Activated B cell treated with CpG ODN at 0.5 μM for 24 hours (primary cell): ENCODE measurements at regions of chr2 and their contacts with region 1.

Region 1: DNA sequence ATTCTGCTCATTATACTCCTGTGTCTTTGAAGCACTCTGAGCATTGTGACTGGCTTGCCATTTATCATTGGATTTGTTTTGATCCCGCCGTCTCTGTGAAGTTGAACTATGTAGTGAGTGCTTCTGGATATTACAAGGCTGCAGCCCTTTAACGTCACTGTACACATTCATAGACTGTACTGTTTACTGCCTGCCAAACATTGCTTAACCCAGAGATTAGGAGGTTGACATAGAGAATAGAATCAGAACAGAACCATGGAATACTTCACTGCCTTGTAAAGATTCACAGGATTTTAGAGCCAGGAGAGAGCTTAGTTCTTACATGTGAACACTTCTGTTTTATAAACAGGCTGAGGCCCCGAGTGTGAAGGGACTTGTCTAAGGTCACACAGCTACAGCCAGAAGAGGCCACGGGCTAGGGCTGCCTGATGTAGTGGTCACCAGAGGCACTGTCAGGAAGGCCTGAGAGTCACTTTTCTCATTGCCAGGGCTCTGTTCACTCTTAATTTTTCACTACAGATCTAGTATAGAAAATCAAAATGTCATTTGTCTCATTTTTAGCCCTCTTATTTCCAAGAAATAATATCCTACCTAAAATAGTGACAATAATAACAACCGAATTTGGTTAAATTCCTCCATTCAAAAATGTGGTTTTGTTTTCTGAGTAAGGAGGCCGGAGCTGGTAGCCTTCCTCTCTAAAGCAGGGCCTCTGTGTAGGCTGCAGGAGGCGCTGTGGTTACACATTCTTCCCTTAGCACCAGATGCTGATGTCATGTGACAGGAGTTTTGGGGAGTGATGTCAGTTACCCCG is 87.9 kb downstream of the UGGT1 start:
- DNase-seq: no peak
- ATAC-seq: peak; percentile 37
- H3K4me3 Mint-ChIP-seq: no peak overlapping the region
- H3K27ac Mint-ChIP-seq: no peak overlapping the region
- H3K4me1 Mint-ChIP-seq: no peaks in the 10 kb centered on the region
- H3K27me3 Mint-ChIP-seq: no peaks in the 10 kb centered on the region
- CTCF ChIP-seq: no peak

Region 2: DNA sequence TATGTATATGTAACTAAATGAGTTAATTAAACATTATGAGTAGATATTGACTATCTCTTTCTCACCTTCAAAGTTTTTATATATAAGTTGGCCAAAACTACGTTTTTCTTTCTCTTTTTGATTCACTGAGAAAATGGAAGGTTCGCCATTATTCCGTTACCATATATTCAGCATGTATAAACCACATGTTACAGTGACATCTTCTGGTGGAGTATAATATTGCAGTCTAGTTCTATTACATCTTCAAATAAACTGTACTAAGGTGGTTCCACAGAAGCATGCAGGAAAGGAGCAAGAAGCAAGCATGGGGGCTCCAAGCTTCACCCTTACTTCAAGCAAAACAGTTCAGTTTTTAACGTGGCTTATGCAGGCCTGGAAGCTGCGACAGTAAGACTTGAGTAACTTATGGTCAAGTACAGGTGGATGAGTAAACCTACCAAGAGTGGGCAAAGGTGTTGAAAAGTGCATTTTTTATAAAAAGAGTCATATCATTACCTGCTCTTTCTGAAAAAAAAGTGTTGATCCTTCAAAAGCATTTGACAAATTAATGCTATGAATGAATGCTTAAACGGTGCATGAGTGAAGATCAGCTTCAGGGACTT is 1670.8 kb after region 1 on chr2:
- CTCF ChIA-PET with region 1: no interaction called
- POLR2A ChIA-PET with region 1: no interaction called
- intact Hi-C with region 1: loop called (anchors 5 kb)
- DNase-seq: no peak
- ATAC-seq: peak; percentile 82
- H3K4me3 Mint-ChIP-seq: no peak overlapping the region
- H3K27ac Mint-ChIP-seq: no peak overlapping the region
- H3K4me1 Mint-ChIP-seq: peaks cover 1% of the 10 kb centered on the region
- H3K27me3 Mint-ChIP-seq: peaks cover 17% of the 10 kb centered on the region
- CTCF ChIP-seq: no peak